Mammary epithelial cell (primary cell): ENCODE measurements at regions of chr2 and their contacts with region 1.

Region 1: DNA sequence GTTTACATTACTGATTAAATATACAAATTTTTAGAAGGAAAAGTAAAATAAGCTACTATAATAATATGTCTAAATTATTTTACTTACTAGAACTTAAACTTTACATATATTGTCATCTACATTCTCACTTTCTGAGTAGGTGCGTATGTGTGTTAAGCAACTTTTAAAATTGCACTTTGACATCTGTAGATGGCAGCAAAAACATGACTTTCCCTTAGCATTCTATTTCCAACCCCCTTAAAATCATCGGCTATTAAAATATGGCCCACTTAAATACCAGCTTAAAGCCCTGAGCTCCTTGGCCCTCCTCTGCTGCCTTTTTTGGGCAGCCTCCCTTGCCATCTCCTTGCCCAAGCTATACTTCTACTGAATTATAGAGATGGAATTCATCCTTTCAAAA is 78.0 kb downstream of the UPP2 start:
- DNase-seq: no peak
- H3K4me3 ChIP-seq: no peak overlapping the region
- H3K27ac ChIP-seq: no peak overlapping the region
- H3K4me1 ChIP-seq: no peaks in the 10 kb centered on the region
- H3K27me3 ChIP-seq: no peaks in the 10 kb centered on the region
- CTCF ChIP-seq: peak; percentile 34 to 53

Region 2: DNA sequence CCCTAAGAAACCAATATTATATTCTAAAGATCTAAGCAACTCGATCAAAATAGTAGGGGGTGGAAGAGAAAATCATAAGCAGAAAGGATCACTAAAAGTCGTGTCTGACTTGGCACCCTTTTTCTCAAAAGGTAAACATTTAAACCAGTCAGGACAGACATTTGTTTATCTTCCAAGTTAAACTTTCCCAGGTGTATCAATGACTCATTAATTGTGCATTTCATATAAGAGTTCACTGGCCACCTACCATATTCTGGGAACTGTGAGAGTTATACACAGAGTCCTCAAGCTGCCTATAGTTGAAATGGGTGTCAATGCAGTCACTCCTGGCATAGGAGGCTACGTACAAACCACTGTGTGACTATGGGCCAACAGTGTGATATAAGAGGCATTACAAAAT is 298.7 kb before region 1 on chr2:
- CTCF ChIA-PET with region 1: no interaction called
- dilution Hi-C with region 1: no loop called
- in situ Hi-C with region 1: no loop called
- intact Hi-C with region 1: no loop called
- DNase-seq: peak; percentile 69
- H3K4me3 ChIP-seq: no peak overlapping the region
- H3K27ac ChIP-seq: no peak overlapping the region
- H3K4me1 ChIP-seq: peaks cover 17% of the 10 kb centered on the region
- H3K27me3 ChIP-seq: no peaks in the 10 kb centered on the region
- CTCF ChIP-seq: no peak

Region 3: DNA sequence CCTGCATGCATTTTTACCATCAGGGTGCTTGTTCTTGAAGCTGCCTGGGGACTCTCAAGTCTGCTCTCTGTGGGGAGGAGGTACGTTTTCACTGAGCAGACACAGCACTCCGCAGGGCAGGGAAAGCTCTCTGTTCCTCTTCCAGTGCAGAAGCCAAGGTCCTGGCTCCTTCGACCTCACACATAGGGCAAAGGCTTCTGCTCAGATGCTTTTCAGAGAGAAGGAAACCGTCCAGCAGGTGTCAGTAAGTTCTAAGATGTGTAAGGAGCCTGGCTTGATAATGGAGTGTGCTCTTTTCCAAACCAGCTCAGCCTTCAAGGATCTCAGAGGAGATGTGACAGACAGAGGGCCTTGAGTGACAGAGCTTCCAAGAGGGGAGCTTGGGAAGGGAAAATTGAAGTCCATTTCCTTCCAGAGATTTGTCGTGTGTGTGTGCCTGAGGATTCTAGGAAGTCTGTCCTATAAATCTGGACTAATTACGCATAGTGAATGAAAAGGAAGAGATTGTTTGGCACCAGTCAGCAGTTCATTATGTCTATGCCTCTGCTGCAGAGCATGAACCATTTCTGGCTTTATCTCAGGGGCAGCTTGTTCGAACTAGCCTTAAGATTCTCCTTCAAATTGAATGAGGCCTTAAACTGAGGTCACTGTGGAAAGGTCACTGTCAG is 145.3 kb before region 1 on chr2:
- CTCF ChIA-PET with region 1: no interaction called
- dilution Hi-C with region 1: loop called (anchors 10 kb)
- in situ Hi-C with region 1: no loop called
- intact Hi-C with region 1: loop called (anchors 5 kb)
- DNase-seq: peak; percentile 43
- H3K4me3 ChIP-seq: no peak overlapping the region
- H3K27ac ChIP-seq: no peak overlapping the region
- H3K4me1 ChIP-seq: no peaks in the 10 kb centered on the region
- H3K27me3 ChIP-seq: peaks cover 3% of the 10 kb centered on the region
- CTCF ChIP-seq: peak; percentile 27 to 65

Region 4: DNA sequence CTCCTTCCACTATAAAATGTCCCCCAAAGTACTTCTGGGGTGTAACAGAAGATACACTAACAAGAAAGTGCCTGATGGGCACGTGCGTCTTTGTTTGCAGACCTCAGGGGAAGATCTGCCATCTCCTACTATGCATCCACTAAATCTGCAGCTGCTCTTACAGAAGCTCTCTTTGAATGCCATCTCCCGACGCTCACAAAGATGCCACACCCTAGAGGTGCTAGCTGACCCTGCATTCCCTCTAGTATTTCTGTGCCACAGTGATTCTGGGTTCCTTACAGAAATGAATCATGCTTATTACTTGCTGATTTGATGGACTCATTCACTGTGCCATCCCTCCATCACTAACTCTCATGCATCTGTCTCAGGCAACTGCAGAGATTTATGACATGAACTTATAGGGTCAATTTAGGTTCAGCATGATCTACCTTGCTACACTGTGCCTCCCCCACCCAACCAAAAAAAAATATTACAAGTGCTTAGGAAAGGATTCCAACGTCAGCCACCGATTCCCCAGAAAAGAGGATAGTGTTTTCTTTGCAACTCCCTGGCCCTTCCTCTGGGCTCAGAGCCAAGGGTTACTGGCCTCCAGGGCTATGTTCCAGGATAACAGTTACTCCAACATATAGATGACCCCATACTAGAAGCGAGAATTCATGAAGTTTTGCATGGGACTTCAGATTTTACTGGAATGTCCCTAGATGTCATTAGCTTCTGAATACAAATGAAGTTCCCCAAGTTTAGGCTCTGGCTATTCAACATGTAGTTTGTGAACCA is 93.9 kb after region 1 on chr2:
- CTCF ChIA-PET with region 1: no interaction called
- dilution Hi-C with region 1: no loop called
- in situ Hi-C with region 1: no loop called
- intact Hi-C with region 1: no loop called
- DNase-seq: no peak
- H3K4me3 ChIP-seq: no peak overlapping the region
- H3K27ac ChIP-seq: no peak overlapping the region
- H3K4me1 ChIP-seq: no peaks in the 10 kb centered on the region
- H3K27me3 ChIP-seq: peaks cover 2% of the 10 kb centered on the region
- CTCF ChIP-seq: no peak

Region 5: GRCh38 chr2:158559252-158559651 is 379.6 kb after region 1 on chr2:
- CTCF ChIA-PET with region 1: no interaction called
- dilution Hi-C with region 1: no loop called
- in situ Hi-C with region 1: no loop called
- intact Hi-C with region 1: loop called (anchors 10 kb)
- DNase-seq: no peak
- H3K4me3 ChIP-seq: no peak overlapping the region
- H3K27ac ChIP-seq: no peak overlapping the region
- H3K4me1 ChIP-seq: no peaks in the 10 kb centered on the region
- H3K27me3 ChIP-seq: no peaks in the 10 kb centered on the region
- CTCF ChIP-seq: no peak

Region 6: DNA sequence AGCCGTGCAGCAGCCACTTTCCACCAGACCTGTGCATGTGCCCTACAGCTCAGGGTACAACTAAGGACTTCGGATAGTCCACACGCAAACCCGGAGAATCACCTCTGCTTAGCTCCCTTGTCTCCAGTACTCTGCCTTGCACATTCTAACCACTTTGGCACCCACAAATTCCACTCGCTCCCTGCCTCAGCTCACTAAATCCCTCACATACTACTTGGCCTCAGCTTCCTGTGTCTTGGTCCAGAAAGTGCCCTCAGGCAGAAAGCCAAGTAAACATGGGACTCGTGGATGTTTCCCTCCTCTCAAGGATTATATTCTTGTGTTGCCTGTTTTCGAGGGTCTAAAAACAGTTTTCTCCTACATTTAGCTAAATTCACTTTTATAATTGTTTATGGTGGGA is 457.7 kb after region 1 on chr2:
- CTCF ChIA-PET with region 1: no interaction called
- dilution Hi-C with region 1: no loop called
- in situ Hi-C with region 1: no loop called
- intact Hi-C with region 1: no loop called
- DNase-seq: no peak
- H3K4me3 ChIP-seq: no peak overlapping the region
- H3K27ac ChIP-seq: no peak overlapping the region
- H3K4me1 ChIP-seq: no peaks in the 10 kb centered on the region
- H3K27me3 ChIP-seq: no peaks in the 10 kb centered on the region
- CTCF ChIP-seq: no peak